Natural killer cell (primary cell): ENCODE measurements at regions of chr14 and their contacts with region 1.

Region 1: GRCh38 chr14:63510538-63510937 is 32.6 kb downstream of the PPP2R5E start:
- DNase-seq: peak in 1 of 2 donors; percentile 50
- ATAC-seq: peak; percentile 77 to 88 (median 87)
- H3K4me3 ChIP-seq: no peak overlapping the region
- H3K4me3 Mint-ChIP-seq: peak overlapping the region; percentile 78
- H3K27ac ChIP-seq: peak overlapping the region; percentile 59
- H3K27ac Mint-ChIP-seq: peak overlapping the region; percentile 91 to 93
- H3K4me1 ChIP-seq: peaks cover 29% of the 10 kb centered on the region
- H3K4me1 Mint-ChIP-seq: peaks cover 73 to 74% of the 10 kb centered on the region in 2 donors
- H3K27me3 ChIP-seq: no peaks in the 10 kb centered on the region
- H3K27me3 Mint-ChIP-seq: no peaks in the 10 kb centered on the region
- CTCF ChIP-seq: no peak

Region 2: GRCh38 chr14:63388763-63389431 is 121.6 kb before region 1 on chr14:
- intact Hi-C with region 1: loop called (anchors 10 kb)
- DNase-seq: peak; percentile 57 to 66
- ATAC-seq: peak; percentile 79 to 88 (median 83)
- H3K4me3 ChIP-seq: no peak overlapping the region
- H3K4me3 Mint-ChIP-seq: no peak overlapping the region
- H3K27ac ChIP-seq: no peak overlapping the region
- H3K27ac Mint-ChIP-seq: peak overlapping the region; percentile 44 to 67
- H3K4me1 ChIP-seq: peaks cover 8% of the 10 kb centered on the region
- H3K4me1 Mint-ChIP-seq: peaks cover 26 to 29% of the 10 kb centered on the region in 2 donors
- H3K27me3 ChIP-seq: no peaks in the 10 kb centered on the region
- H3K27me3 Mint-ChIP-seq: no peaks in the 10 kb centered on the region
- CTCF ChIP-seq: peak; percentile 78

Region 3: DNA sequence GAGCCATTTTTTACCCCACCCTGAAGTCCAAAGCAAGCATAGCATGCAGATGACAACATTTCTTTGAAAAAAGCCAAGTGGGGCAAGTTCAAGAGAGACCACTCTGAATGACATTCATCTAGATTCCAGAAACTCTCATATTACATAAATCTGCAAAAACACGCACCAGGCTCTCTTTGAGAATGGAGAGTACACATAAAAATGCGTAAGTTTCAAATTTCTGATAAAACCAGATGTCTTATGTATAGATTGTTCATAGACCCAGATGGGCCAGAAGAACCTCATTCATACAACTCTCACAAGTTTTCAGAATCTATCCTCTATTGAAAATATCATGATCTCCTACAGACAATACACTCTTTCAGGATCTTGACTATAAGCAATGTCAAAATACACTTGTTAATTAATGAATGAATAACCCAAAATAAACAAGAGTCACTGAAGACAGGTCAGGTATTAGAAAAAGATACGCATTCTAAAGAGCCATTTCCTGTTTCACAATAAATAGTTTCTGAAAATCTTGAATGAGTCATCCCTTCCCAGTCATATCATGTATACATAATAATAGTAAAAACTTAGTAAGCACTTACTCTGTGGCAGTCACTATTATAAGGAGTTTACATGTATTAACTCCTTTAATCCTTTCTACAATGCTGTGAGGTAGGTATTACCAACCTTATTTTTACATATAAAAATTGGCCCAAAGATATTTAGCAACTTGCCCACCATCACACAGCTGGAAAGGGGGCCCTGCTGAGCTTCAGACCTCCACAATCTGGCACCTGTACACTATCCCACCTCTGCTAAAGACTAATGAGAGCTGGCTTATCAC is 39.4 kb before region 1 on chr14:
- intact Hi-C with region 1: loop called (anchors 2 kb)
- DNase-seq: peak in 1 of 2 donors; percentile 19
- ATAC-seq: peak; percentile 83 to 86 (median 83)
- H3K4me3 ChIP-seq: no peak overlapping the region
- H3K4me3 Mint-ChIP-seq: no peak overlapping the region
- H3K27ac ChIP-seq: peak overlapping the region; percentile 3
- H3K27ac Mint-ChIP-seq: peak overlapping the region; percentile 73 to 85
- H3K4me1 ChIP-seq: peaks cover 9% of the 10 kb centered on the region
- H3K4me1 Mint-ChIP-seq: peaks cover 33 to 52% of the 10 kb centered on the region in 2 donors
- H3K27me3 ChIP-seq: no peaks in the 10 kb centered on the region
- H3K27me3 Mint-ChIP-seq: no peaks in the 10 kb centered on the region
- CTCF ChIP-seq: no peak

Region 4: DNA sequence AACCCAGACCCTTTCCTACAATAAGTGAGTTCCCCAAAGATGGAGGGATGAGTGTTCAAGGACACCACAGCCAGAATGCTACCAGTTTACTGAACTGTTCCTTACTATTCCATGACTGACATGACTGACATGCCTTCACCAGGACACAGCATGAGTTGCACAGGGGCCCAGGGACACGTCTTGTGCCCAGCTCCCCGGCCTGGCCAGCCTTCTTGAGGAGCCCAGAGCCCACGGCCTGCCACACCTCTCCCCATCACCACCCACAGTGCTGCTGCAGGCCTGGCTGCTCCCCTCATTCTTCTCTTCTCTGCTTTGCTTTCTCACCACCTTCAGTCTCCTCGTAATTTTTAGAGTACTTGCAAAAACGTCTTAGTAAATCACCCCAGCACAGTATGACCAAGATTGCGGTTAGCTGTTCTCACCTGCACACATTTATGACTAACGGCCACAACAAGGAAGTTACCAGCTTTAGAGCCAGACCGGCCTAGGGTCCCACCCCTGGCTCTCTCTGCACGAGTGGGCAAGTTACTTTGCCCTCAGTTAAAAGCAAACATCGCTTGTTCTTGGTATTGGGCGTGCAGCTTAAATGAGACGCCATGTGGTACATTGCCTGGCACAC is 14.1 kb after region 1 on chr14:
- intact Hi-C with region 1: loop called (anchors 2 kb)
- DNase-seq: peak; percentile 39 to 61
- ATAC-seq: peak; percentile 91 to 96 (median 95)
- H3K4me3 ChIP-seq: no peak overlapping the region
- H3K4me3 Mint-ChIP-seq: peak overlapping the region; percentile 67
- H3K27ac ChIP-seq: peak overlapping the region; percentile 51
- H3K27ac Mint-ChIP-seq: peak overlapping the region; percentile 87 to 88
- H3K4me1 ChIP-seq: peaks cover 10% of the 10 kb centered on the region
- H3K4me1 Mint-ChIP-seq: peaks cover 34 to 37% of the 10 kb centered on the region in 2 donors
- H3K27me3 ChIP-seq: no peaks in the 10 kb centered on the region
- H3K27me3 Mint-ChIP-seq: no peaks in the 10 kb centered on the region
- CTCF ChIP-seq: no peak

Region 5: DNA sequence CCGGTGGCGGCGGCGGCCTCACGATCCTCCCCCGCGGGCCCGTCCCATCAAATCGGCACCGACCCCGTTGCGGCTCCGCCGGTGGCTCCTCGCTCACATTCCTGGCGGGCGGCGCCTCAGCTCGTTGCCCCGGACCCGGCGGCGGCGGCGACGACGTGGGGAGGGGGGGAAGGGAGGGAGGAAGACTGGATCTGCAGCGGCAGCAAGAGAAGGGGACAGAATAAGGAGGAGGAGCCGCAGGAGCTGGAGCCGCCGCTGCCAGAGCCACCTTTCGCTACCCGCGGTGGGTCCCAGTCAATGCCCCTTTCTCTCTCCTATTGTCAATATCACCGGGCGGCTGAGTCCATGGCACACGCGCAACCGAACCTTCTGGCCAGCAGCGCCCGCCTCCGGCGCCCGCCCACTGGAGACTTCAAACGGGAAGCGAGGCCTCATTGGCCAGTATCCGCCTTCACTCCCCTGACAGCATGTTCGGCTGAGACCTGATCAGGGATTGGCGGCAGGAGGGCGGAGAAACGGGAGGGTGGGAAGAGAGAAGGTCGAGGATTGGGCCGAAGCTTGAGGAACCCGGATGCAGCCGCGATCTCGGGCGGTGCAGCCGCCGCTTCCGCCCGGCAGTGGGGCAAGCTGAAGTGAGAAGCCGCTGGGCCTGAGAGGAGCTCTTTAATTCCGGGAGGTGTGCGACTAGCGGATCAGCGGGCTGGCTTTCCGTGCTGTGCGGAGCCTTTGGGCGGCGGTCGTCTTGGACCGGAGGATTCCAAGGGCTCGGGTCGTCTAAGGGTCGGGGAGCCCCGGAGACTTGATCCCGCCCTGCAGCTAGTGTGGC is 32.7 kb after region 1 on chr14 and contains the start of gene PPP2R5E:
- intact Hi-C with region 1: loop called (anchors 1 kb)
- DNase-seq: peak; percentile 97 to 99
- ATAC-seq: peak; percentile 95 to 99 (median 95)
- H3K4me3 ChIP-seq: peak within 1 kb of the TSS; percentile 92
- H3K4me3 Mint-ChIP-seq: peak within 1 kb of the TSS; percentile 99
- H3K27ac ChIP-seq: peak within 1 kb of the TSS; percentile 86
- H3K27ac Mint-ChIP-seq: peak within 1 kb of the TSS; percentile 92
- H3K4me1 ChIP-seq: peaks cover 12% of the 10 kb centered on the region
- H3K4me1 Mint-ChIP-seq: peaks cover 28 to 34% of the 10 kb centered on the region in 2 donors
- H3K27me3 ChIP-seq: no peaks in the 10 kb centered on the region
- H3K27me3 Mint-ChIP-seq: no peaks in the 10 kb centered on the region
- CTCF ChIP-seq: no peak
- total RNA-seq, gene PPP2R5E: 57.4 to 64.1 (median 62.4) TPM

Region 6: DNA sequence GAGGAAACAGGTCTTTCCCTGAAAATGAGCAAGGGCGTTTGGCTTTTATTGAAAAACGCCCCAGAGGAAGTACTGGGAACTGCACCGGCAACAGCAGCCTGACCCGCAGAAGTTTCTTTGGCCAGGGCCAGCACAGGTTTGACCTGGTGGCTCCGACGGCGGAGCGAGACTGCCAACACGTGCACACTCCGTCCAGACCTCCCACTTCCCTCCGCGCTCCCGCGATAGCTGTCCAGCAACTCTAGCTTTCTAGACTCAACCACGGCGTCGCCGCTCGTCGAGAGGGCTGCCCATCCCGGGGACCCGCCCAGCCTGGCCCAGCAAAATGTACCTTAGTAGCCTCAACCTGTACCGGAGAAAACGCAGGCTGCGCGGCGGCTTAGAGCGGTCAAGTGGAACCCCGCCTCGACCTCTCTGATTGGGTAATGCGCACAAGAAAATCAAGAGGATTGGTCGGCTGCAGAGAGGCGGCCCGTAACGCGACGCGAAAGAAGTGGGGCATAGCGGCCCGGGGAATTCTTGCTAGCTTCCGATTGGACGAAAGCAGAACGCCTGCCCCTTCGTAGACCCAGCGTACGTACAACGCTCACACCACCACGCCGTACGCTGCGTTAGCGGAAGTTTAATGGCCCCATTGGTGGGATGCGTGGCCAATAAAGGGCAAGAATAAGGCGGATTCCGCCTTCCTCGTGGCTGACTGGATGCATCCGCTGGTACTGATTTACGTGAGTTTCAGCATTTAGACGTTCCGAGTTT is 131.1 kb after region 1 on chr14 and contains the start of gene WDR89:
- intact Hi-C with region 1: loop called (anchors 1 kb)
- DNase-seq: peak; percentile 92 to 99
- ATAC-seq: peak; percentile 79 to 92 (median 81)
- H3K4me3 ChIP-seq: peak within 1 kb of the TSS; percentile 90
- H3K4me3 Mint-ChIP-seq: peak within 1 kb of the TSS; percentile 92
- H3K27ac ChIP-seq: peak within 1 kb of the TSS; percentile 99
- H3K27ac Mint-ChIP-seq: peak within 1 kb of the TSS; percentile 95 to 96
- H3K4me1 ChIP-seq: peaks cover 11% of the 10 kb centered on the region
- H3K4me1 Mint-ChIP-seq: peaks cover 22 to 28% of the 10 kb centered on the region in 2 donors
- H3K27me3 ChIP-seq: no peaks in the 10 kb centered on the region
- H3K27me3 Mint-ChIP-seq: no peaks in the 10 kb centered on the region
- CTCF ChIP-seq: peak; percentile 70
- total RNA-seq, gene WDR89: 9.6 to 13.4 (median 10.7) TPM